Panc1 (cell line): ENCODE measurements at regions of chr7 and their contacts with region 1.

Region 1: GRCh38 chr7:73811760-73812168 is 19.0 kb upstream of the CLDN4 start:
- DNase-seq: no peak
- ATAC-seq: peak; percentile 91
- H3K4me3 ChIP-seq: no peak overlapping the region
- H3K27ac ChIP-seq: no peak overlapping the region
- H3K4me1 ChIP-seq: 0 out of 2 replicates have a peak, but pooled peaks cover 3% of the 10 kb centered on the region
- H3K27me3 ChIP-seq: no peaks in the 10 kb centered on the region
- CTCF ChIP-seq: peak; percentile 87

Region 2: DNA sequence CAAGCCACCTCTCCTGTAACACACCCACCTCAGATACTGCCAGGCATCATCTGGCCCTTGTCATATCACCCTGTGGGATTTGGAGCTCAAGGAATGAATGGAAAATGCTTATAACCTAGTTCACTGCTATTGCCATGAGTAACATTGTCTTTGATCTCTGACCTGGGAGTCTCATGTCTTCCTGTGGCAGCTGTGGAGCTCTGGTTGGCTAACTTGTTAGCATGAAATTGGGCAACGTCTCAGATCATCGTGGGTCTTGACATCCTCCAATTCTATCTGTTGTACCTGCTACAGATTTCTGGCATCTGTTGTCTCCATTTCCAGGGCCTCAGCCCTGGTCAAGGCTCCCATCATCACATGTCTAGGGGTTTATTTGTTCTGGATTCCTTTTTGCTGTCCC is 47.0 kb after region 1 on chr7:
- CTCF ChIA-PET with region 1: no interaction called
- POLR2A ChIA-PET with region 1: no interaction called
- in situ Hi-C with region 1: no loop called
- intact Hi-C with region 1: loop called (anchors 5 kb)
- DNase-seq: no peak
- ATAC-seq: no peak
- H3K4me3 ChIP-seq: no peak overlapping the region
- H3K27ac ChIP-seq: no peak overlapping the region
- H3K4me1 ChIP-seq: no peaks in the 10 kb centered on the region
- H3K27me3 ChIP-seq: no peaks in the 10 kb centered on the region
- CTCF ChIP-seq: no peak

Region 3: GRCh38 chr7:73885975-73886798 is 74.4 kb after region 1 on chr7:
- CTCF ChIA-PET with region 1: no interaction called
- POLR2A ChIA-PET with region 1: no interaction called
- in situ Hi-C with region 1: no loop called
- intact Hi-C with region 1: no loop called
- DNase-seq: no peak
- ATAC-seq: 0 out of 2 replicates have a peak, but pooled peaks have one; percentile 11
- H3K4me3 ChIP-seq: no peak overlapping the region
- H3K27ac ChIP-seq: no peak overlapping the region
- H3K4me1 ChIP-seq: no peaks in the 10 kb centered on the region
- H3K27me3 ChIP-seq: no peaks in the 10 kb centered on the region
- CTCF ChIP-seq: no peak

Region 4: GRCh38 chr7:74002474-74003017 is 190.8 kb after region 1 on chr7:
- CTCF ChIA-PET with region 1: interaction called, 10 read pairs
- POLR2A ChIA-PET with region 1: no interaction called
- in situ Hi-C with region 1: no loop called
- intact Hi-C with region 1: no loop called
- DNase-seq: no peak
- ATAC-seq: peak; percentile 76
- H3K4me3 ChIP-seq: no peak overlapping the region; a peak in 1 of 4 replicates
- H3K27ac ChIP-seq: no peak overlapping the region
- H3K4me1 ChIP-seq: no peaks in the 10 kb centered on the region
- H3K27me3 ChIP-seq: no peaks in the 10 kb centered on the region
- CTCF ChIP-seq: no peak

Region 5: DNA sequence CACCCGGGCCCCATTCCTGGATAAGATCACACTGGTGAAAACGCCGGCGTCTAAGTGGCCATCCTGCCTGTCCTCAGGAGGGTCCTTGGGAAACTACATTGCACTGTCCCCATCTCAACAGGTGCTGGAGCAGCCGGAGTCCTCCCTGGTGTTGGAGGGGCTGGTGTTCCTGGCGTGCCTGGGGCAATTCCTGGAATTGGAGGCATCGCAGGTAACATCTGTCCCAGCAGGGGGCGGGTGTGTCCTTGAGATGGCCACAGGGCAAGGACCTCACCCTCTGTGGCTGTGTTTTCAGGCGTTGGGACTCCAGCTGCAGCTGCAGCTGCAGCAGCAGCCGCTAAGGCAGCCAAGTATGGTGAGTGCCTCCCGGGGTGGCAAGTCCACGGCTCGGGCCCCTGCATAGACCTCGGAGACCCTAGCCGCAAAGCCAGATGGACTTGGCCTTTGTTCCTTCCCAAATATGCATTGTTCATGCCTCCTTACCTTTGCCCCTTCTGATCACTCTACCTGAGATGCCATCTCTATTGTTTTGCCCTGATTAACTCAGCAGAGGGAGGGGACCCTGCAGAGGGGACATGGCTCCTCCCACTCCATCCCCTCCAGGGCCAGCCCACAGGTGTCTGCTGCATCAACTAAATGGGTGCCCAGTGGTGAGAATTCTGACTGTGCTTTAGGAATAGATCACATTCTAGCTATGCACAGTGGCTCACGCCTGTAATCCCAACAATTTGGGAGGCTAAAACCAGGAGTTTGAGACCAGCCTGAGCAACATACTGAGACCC is 240.1 kb after region 1 on chr7:
- CTCF ChIA-PET with region 1: no interaction called
- POLR2A ChIA-PET with region 1: no interaction called
- in situ Hi-C with region 1: no loop called
- intact Hi-C with region 1: no loop called
- DNase-seq: no peak
- ATAC-seq: peak; percentile 81
- H3K4me3 ChIP-seq: no peak overlapping the region
- H3K27ac ChIP-seq: no peak overlapping the region
- H3K4me1 ChIP-seq: no peaks in the 10 kb centered on the region
- H3K27me3 ChIP-seq: peaks cover 2% of the 10 kb centered on the region; the same call in 1 of the 2 replicates
- CTCF ChIP-seq: no peak; the same call in 1 of the 2 replicates